ENCODE measurements at regions of chr22 and their contacts with region 1.

Region 1: GRCh38 chr22:17098379-17098819 is 13.6 kb downstream of the IL17RA start:
- DNase-seq: peak; percentile 53 to 89 (median 84)
- H3K4me3 ChIP-seq: peak overlapping the region in 3 of 7 experiments; percentile 15 to 19 (median 17)
- H3K27ac ChIP-seq: no peak overlapping the region
- H3K4me1 ChIP-seq: peaks cover 32 to 83% (median 49%) of the 10 kb centered on the region in 4 experiments
- H3K27me3 ChIP-seq: peaks cover 0 to 3% (median 0%) of the 10 kb centered on the region in 5 experiments

Region 2: GRCh38 chr22:17035246-17035645 is 63.2 kb before region 1 on chr22:
- CTCF ChIA-PET with region 1: no interaction called
- POLR2A ChIA-PET with region 1: no interaction called
- DNase-seq: no peak
- H3K4me3 ChIP-seq: no peak overlapping the region
- H3K27ac ChIP-seq: no peak overlapping the region
- H3K4me1 ChIP-seq: peaks cover 0 to 5% (median 1%) of the 10 kb centered on the region in 4 experiments
- H3K27me3 ChIP-seq: peaks cover 0 to 28% (median 10%) of the 10 kb centered on the region in 5 experiments

Region 3: DNA sequence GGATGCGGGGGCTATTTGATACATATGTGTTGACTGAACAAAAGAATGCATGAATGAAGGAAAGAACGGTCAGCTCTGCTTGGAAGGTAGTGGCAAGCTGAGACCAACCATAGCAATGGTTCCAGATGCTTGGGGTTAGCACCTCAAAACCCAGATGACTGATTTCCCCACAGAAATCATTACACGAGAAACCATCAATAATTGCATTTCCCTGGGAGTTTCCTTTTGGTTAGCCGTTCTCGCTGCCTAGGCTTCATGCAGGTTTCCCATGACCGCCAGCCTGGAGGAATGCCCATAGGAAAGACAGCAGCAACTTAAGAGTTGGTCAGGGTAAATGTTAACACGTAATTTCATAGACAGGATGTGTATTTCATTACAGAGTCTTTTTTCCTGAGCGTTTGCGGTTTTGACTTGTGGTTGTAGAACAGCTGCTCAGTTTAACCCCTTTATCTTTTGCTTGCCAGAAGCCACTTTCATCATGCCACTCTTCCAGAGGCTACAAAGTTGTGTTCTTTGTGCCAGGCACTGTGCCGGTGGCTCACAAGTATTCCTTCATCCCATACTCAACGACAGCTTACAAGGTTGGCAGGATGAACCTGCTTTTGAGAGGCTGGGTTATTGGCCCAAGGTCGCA is 10.8 kb before region 1 on chr22:
- CTCF ChIA-PET with region 1: interaction called, 11 read pairs
- POLR2A ChIA-PET with region 1: no interaction called
- DNase-seq: peak; percentile 68 to 93 (median 89)
- H3K4me3 ChIP-seq: peak overlapping the region in 6 of 7 experiments; percentile 6 to 84 (median 58)
- H3K27ac ChIP-seq: no peak overlapping the region
- H3K4me1 ChIP-seq: peaks cover 32 to 76% (median 49%) of the 10 kb centered on the region in 4 experiments
- H3K27me3 ChIP-seq: peaks cover 0 to 2% (median 0%) of the 10 kb centered on the region in 5 experiments

Region 4: GRCh38 chr22:17706018-17706900 is 607.9 kb after region 1 on chr22:
- CTCF ChIA-PET with region 1: no interaction called
- POLR2A ChIA-PET with region 1: no interaction called
- DNase-seq: peak; percentile 77 to 92 (median 90)
- H3K4me3 ChIP-seq: peak overlapping the region in 6 of 7 experiments; percentile 10 to 71 (median 52)
- H3K27ac ChIP-seq: peak overlapping the region; percentile 12 to 73
- H3K4me1 ChIP-seq: peaks cover 5 to 25% (median 15%) of the 10 kb centered on the region in 4 experiments
- H3K27me3 ChIP-seq: no peaks in the 10 kb centered on the region